ENCODE measurements at regions of chr12 and their contacts with region 1.

Region 1: DNA sequence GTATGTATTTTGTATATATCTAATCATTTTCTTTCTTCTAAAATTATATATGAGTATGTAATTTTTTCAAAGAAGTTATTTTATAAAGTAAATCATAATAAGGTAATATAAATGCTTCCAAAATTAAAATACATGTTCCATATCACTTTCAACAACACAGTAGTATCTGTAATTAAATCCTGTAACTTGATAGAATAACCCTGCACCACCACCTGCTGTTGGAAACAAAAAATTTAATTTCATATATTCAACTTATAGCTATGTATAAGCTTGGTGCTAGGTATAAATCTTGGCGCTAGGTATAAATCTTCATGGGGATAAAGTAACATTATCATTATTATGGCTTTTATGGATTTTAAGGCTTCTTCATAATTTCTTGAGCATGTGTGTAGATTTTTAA is 149.7 kb upstream of the DCN start:
- DNase-seq: no peak
- CTCF ChIP-seq: no peak

Region 2: DNA sequence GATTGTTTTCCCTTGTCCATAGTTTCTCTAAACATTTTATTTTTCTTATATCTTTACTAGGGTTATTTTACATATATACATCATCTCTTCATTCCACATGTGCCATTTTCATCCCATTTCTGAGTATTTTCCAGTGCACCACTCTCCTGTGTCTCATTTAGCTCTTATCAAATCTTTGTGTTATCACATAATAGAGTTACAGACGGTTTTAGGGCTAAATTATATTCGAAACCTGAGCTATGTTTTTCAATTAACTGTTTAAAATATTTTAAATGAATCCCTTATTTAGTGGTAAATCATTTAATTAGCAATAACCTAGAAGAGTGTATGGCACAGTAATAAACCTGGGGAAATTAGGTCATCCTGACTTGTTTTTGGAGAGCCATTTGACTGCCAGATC is 10.7 kb after region 1 on chr12:
- CTCF ChIA-PET with region 1: interaction called, 10 read pairs
- POLR2A ChIA-PET with region 1: no interaction called
- DNase-seq: no peak
- CTCF ChIP-seq: no peak

Region 3: DNA sequence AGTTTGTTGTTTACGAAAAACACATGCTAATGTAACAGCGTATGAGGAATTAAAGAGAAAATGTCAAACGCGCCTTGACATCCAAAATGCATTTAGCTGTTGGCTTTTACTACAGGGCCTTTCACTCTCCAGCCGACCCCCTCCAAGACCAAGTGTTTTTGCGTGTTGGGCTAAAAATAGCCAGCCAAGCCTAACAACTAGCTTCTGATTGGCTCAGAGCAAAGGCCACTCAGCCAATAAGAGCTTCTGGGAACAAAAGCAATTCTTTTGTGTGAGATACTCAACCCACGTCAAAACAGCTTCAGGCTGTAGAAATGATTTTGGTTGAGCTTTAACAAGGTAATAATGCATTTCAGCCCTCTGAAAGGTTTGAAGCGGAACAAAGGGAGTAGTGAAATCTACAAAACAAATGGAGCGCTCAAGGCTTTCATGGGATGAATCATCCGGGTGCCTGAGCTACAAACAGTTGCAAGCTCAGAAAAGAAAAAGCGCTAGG is 49.1 kb after region 1 on chr12:
- CTCF ChIA-PET with region 1: no interaction called
- POLR2A ChIA-PET with region 1: no interaction called
- DNase-seq: peak; percentile 24
- CTCF ChIP-seq: no peak

Region 4: GRCh38 chr12:91441993-91442952 is 110.0 kb after region 1 on chr12:
- CTCF ChIA-PET with region 1: no interaction called
- POLR2A ChIA-PET with region 1: no interaction called
- DNase-seq: no peak
- CTCF ChIP-seq: no peak

Region 5: DNA sequence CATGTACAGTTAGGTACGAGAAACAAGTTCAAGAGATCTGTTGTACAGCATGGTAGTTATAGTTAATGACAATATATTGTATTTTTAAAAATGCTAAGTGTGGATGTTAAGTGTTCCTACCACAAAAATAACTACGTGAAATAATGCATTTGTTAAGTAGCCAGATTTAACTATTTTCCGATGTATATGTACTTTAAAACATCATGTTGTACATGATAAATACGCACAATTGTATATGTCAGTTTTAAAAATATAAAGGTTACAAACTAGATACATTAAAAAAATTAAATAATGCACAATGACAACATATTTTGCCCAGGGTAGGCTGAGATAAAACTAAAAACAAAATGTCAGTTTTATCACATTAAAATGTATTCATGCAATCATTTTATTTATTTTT is 135.4 kb after region 1 on chr12:
- CTCF ChIA-PET with region 1: no interaction called
- POLR2A ChIA-PET with region 1: no interaction called
- DNase-seq: no peak
- CTCF ChIP-seq: no peak

Measured in GM10248 (cell line).